Tibial artery (tissue), 4 donors: ENCODE measurements at regions of chr19 and their contacts with region 1.

Region 1: GRCh38 chr19:1020868-1021425 is at the start of gene TMEM259:
- DNase-seq: peak; percentile 98 to 99
- H3K4me3 ChIP-seq: peak within 1 kb of the TSS; percentile 91 to 96
- H3K27ac ChIP-seq: peak within 1 kb of the TSS; percentile 91
- H3K4me1 ChIP-seq: peaks cover 12 to 82% (median 60%) of the 10 kb centered on the region in 4 donors
- H3K27me3 ChIP-seq: no peaks in the 10 kb centered on the region
- CTCF ChIP-seq: peak in 1 of 2 experiments; percentile 21

Region 2: DNA sequence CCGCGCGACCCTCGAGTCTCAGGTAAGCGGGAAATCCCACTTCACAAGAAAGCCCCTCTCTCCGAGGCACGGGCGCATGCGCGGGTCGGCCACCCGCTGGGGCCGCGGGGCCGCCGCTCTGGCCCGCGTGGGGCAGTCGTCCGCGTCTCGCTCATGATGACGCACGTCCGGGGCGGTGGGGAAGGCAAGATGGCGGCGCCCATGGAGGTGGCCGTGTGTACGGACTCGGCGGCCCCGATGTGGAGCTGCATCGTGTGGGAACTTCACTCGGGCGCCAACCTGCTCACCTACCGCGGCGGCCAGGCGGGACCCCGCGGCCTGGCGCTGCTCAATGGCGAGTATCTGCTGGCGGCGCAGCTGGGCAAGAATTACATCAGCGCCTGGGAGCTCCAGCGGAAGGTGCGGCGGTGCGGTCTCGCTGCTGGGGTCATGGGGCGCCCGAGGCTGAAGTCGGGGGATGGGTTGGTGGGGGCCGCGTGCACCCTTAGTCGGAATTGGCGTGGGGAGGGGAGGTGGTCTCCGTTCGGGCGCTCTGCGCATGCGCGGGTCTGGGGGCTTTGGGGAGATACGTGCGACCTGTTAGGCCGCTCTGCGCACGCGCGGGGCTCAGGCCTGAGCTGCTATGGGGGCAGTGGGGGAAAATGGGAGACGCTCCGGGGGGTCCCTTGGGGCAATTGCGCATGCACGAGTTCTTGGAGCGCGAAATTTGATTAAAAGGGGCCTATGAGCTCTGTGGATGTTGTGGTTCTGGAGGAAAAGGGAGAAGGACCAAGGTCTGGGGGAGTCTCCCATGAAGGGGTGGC is 36.6 kb before region 1 on chr19 and contains the start of gene WDR18:
- intact Hi-C with region 1: no loop called
- DNase-seq: peak; percentile 93 to 96
- H3K4me3 ChIP-seq: peak within 1 kb of the TSS; percentile 94 to 96
- H3K27ac ChIP-seq: peak within 1 kb of the TSS; percentile 82 to 87
- H3K4me1 ChIP-seq: peaks cover 0 to 35% (median 20%) of the 10 kb centered on the region in 4 donors
- H3K27me3 ChIP-seq: peaks cover 0 to 11% of the 10 kb centered on the region in 2 donors
- CTCF ChIP-seq: peak in 1 of 2 experiments; percentile 44

Region 3: GRCh38 chr19:1045247-1045603 is 24.3 kb after region 1 on chr19:
- intact Hi-C with region 1: no loop called
- DNase-seq: no peak
- H3K4me3 ChIP-seq: no peak overlapping the region
- H3K27ac ChIP-seq: no peak overlapping the region
- H3K4me1 ChIP-seq: peaks cover 0 to 30% (median 26%) of the 10 kb centered on the region in 4 donors
- H3K27me3 ChIP-seq: peaks cover 0 to 27% of the 10 kb centered on the region in 2 donors
- CTCF ChIP-seq: no peak

Region 4: GRCh38 chr19:1103708-1104310 is 82.9 kb after region 1 on chr19 and contains the start of gene GPX4:
- intact Hi-C with region 1: loop called (anchors 5 kb)
- DNase-seq: peak; percentile 99 to 100
- H3K4me3 ChIP-seq: peak within 1 kb of the TSS; percentile 95 to 98
- H3K27ac ChIP-seq: peak within 1 kb of the TSS; percentile 99 to 100
- H3K4me1 ChIP-seq: peaks cover 7 to 77% (median 63%) of the 10 kb centered on the region in 4 donors
- H3K27me3 ChIP-seq: no peaks in the 10 kb centered on the region
- CTCF ChIP-seq: peak in 1 of 2 experiments; percentile 6

Region 5: GRCh38 chr19:1173845-1174809 is 153.2 kb after region 1 on chr19 and contains the start of gene SBNO2:
- intact Hi-C with region 1: loop called (anchors 10 kb)
- DNase-seq: peak; percentile 84 to 91
- H3K4me3 ChIP-seq: peak within 1 kb of the TSS; percentile 70 to 79
- H3K27ac ChIP-seq: peak within 1 kb of the TSS; percentile 92
- H3K4me1 ChIP-seq: peaks cover 0 to 60% (median 27%) of the 10 kb centered on the region in 4 donors
- H3K27me3 ChIP-seq: no peaks in the 10 kb centered on the region
- CTCF ChIP-seq: no peak